ENCODE measurements at regions of chr12 and their contacts with region 1.

Region 1: DNA sequence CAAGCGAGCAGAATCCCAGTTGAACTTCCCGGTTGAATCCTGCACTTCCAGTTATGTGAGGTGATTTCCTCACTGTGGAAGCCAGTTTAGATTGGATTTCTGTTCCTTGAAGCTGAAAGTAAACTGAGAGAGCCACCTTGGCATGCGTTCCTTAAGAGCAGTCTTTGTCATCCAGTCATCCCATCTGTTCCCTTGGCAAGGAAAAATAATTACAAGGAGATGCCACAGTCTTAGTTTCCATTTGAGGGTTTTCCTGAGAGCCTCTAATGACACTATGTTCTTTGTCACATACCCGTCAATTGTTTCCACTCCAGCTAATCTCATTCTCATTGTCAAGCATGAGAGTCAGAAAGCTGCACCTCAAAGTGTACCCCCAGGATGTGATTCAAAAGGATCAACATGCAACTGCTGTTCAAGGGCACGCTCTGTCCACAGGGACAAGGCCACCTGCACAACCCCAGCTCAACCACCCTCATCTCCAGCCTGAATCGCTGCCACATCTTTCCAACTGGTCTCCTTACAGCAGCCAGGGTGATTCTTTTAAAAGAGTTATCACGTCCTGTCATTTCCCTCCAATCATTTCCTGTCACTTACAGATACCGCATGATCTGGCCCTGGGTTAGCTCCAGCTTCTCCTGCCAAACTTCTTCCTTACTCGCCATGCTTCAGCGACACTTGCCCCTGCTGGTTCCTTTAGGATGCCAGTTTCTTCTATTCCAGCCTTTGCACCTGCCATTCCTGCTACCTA is 18.0 kb upstream of the TCP11L2 start:
- DNase-seq: no peak
- H3K4me3 Mint-ChIP-seq: no peak overlapping the region
- H3K27ac Mint-ChIP-seq: no peak overlapping the region
- H3K4me1 Mint-ChIP-seq: peaks cover 2% of the 10 kb centered on the region
- H3K27me3 Mint-ChIP-seq: peaks cover 9% of the 10 kb centered on the region

Region 2: DNA sequence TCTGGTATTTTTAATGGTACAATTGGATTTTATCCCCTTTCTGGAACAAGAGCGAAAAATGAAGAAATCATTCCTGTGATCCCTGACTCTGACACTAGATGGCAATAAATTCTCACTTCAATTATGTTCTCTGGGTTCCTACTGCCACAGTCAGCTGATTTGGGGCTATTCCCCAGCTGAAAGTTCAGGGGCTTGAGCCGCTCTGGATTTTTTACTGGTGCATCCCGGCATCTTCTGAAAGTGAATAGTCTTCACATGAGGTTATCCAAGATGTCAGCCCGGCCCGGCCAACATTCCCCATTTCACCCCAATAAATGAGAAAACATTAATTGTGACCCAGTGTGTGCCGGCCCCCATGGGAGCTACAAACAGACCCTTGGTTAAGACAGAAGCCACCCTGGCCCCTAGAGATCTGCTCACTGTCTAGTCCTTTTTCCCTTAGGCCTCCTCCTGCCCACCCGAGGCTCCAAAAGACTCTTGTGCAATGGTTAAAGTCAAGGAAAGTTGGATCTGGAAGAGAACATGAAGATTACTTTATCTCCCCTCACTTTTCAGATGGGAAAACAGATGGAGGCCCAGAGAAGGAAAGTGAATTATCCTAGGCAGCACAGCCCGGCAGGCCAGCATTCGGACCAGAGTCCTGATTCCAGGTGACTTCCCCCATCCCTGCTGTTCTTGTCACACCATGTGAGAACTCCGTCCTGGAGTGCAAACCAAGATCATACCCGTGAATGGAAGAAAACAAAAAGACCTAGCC is 57.5 kb before region 1 on chr12:
- CTCF ChIA-PET with region 1: interaction called, 11 read pairs
- POLR2A ChIA-PET with region 1: no interaction called
- DNase-seq: peak; percentile 41
- H3K4me3 Mint-ChIP-seq: no peak overlapping the region
- H3K27ac Mint-ChIP-seq: peak overlapping the region; percentile 82
- H3K4me1 Mint-ChIP-seq: peaks cover 17% of the 10 kb centered on the region
- H3K27me3 Mint-ChIP-seq: peaks cover 2% of the 10 kb centered on the region

Region 3: GRCh38 chr12:106271575-106272505 is 12.7 kb before region 1 on chr12:
- CTCF ChIA-PET with region 1: interaction called, 10 read pairs
- POLR2A ChIA-PET with region 1: no interaction called
- DNase-seq: no peak
- H3K4me3 Mint-ChIP-seq: no peak overlapping the region
- H3K27ac Mint-ChIP-seq: no peak overlapping the region
- H3K4me1 Mint-ChIP-seq: peaks cover 21% of the 10 kb centered on the region
- H3K27me3 Mint-ChIP-seq: peaks cover 7% of the 10 kb centered on the region